ENCODE measurements at regions of chr17 and their contacts with region 1.

Region 1: GRCh38 chr17:74961657-74962490 is 10.7 kb downstream of the HID1 start:
- H3K4me3 Mint-ChIP-seq: no peak overlapping the region
- H3K27ac Mint-ChIP-seq: no peak overlapping the region
- H3K4me1 Mint-ChIP-seq: peaks cover 18% of the 10 kb centered on the region
- H3K27me3 Mint-ChIP-seq: peaks cover 48% of the 10 kb centered on the region

Region 2: GRCh38 chr17:74923533-74924249 is 38.2 kb before region 1 on chr17:
- intact Hi-C with region 1: loop called (anchors 1 kb)
- H3K4me3 Mint-ChIP-seq: peak overlapping the region; percentile 67
- H3K27ac Mint-ChIP-seq: peak overlapping the region; percentile 58
- H3K4me1 Mint-ChIP-seq: peaks cover 39% of the 10 kb centered on the region
- H3K27me3 Mint-ChIP-seq: peaks cover 80% of the 10 kb centered on the region

Region 3: DNA sequence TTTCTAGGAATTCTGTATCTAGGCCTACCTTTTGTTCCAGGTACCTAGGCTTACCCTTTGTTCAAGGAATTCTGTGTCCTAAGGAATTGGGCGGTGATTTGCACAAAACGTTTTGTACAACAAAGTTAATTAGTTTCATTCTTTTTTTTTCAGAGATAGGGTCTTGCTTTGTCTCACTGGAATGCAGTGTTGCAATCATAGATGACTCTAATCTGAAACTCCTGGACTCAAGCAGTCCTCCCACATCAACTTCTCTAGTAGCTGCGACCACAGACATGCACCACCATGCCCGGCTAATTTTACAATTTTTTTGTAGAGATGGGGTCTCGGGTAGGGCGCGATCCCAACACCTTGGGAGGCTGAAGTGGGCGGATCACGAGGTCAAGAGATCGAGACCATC is 32.6 kb after region 1 on chr17:
- intact Hi-C with region 1: no loop called
- H3K4me3 Mint-ChIP-seq: no peak overlapping the region
- H3K27ac Mint-ChIP-seq: no peak overlapping the region
- H3K4me1 Mint-ChIP-seq: peaks cover 56% of the 10 kb centered on the region
- H3K27me3 Mint-ChIP-seq: peaks cover 21% of the 10 kb centered on the region

Region 4: GRCh38 chr17:75006653-75007052 is 44.8 kb after region 1 on chr17:
- intact Hi-C with region 1: loop called (anchors 1 kb)
- H3K4me3 Mint-ChIP-seq: no peak overlapping the region
- H3K27ac Mint-ChIP-seq: peak overlapping the region; percentile 26
- H3K4me1 Mint-ChIP-seq: peaks cover 24% of the 10 kb centered on the region
- H3K27me3 Mint-ChIP-seq: peaks cover 19% of the 10 kb centered on the region

Region 5: DNA sequence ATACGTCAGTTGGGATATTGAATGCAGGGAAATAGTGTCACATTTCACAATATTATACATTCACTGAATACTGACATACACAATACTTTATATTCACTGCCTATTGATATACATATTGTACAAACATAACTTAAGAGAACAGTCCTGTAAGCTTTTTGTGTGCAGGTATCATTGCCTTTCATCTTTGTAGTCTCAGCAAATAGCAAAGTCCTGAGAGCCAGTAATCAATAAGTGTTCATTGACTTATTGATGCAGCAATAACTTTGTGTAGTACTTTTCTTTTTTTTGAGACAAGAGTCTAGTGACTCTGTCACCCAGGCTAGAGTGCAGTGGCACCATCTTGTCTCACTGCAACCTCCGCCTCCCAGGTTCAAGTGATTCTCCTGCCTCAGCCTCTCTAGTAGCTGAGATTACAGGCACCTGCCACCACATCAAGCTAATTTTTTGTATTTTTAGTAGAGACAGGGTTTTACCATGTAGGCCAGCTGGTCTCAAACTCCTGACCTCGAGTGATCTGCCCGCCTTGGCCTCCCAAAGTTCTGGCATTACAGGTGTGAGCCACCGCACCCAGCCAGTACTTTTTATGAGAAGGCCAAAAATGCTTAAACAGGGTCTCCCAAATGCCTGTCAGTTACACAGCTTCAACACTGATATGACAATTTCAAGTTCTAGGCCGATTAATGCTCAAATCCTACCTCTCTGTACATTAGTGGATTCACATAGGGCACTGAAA is 238.2 kb after region 1 on chr17:
- intact Hi-C with region 1: loop called (anchors 2 kb)
- H3K4me3 Mint-ChIP-seq: no peak overlapping the region
- H3K27ac Mint-ChIP-seq: no peak overlapping the region
- H3K4me1 Mint-ChIP-seq: peaks cover 16% of the 10 kb centered on the region
- H3K27me3 Mint-ChIP-seq: no peaks in the 10 kb centered on the region